ENCODE measurements at regions of chr22 and their contacts with region 1.

Region 1: DNA sequence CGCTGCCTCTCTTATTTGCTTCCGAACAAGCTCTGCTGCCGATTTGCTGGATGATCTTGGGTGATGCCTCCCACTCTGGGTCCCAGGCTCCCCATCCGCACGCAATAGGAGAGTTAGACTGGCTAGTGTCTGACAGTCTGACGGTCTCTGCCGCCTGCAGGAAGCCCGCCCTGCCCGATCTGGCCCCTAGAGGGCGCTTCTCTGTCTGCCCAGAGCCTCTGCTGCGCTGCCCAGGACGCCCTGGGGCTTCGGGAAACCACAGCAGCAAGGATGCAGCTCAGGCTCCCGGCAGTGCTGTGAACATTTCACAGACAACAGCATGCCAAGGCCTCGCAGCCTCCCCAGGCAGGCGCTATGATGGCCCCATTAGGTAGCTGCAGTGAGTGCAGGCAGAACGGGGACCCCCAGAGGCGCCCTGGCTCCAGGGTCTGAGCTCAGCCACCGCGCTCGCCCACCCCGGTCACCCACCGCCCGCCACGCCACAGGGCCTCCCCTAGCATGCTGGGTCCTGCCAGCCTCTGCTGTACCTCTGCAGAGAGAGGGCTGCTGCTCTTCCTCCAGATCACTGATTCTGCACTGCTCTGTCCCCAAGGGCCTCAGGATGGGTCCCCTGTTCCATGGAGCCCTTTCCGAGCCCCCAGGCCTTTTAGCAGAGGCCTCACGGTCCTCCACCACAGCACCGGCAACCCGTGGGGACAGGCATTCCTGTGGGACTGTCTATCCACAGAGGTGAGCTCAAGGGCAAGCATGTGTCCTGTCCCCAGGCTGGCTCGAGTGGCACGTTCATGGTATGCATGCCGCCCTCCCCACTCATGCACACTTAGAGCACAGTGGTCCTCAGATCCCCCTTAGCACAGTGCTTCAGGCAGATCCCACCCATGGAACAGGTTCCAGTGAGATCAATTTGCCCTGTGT is 4.3 kb upstream of the BAIAP2L2 start:
- DNase-seq: peak; percentile 86 to 93 (median 90)
- H3K4me3 ChIP-seq: no peak overlapping the region
- H3K27ac ChIP-seq: peak overlapping the region in 39 of 59 donors; percentile 14 to 80 (median 62)
- H3K27me3 ChIP-seq: no peaks in the 10 kb centered on the region
- CTCF ChIP-seq: peak; percentile 46 to 97 (median 92)

Region 2: DNA sequence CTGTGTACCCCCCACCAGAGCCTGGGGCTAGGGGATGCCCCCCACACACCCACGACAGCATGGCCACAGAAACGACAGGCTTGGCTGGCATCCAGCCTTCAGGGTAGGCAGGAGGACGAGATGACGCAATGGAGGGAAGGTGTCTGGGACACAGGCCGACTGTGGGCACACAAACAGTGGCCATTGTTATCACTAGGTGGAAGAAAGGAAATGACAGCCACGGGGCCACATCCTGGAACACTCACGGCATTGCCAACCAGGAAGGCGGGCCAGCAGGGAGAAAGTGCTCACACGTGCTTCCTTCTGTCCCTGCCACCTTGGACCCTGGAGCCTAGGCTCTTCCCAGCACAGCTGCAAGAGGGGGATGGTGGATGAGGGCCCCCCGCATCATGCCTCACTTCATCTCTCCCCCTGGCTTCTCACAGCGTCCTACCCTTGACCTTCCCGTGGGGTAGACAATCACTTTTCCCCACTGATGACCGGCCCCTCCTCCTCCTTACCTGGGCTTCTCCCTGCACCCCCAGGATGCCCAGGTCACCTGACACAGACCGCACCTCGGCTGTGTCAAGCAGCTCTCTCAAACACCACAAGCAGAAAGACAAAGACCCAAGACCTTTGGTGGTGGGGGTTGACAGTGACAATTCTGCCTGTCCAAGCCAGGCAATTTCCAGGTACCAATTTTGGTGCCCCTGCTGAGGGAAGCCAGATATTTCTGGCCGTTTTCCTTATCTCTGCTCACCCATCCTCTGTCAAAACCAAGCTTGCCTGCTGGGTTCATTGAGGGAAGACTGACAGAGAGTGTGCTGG is 58.3 kb after region 1 on chr22:
- intact Hi-C with region 1: loop called in 1 of 2 experiments (anchors 5 kb)
- DNase-seq: peak in 6 of 10 donors; percentile 46 to 71 (median 66)
- H3K4me3 ChIP-seq: peak overlapping the region in 4 of 59 donors; percentile 7 to 36 (median 16)
- H3K27ac ChIP-seq: peak overlapping the region in 53 of 59 donors; percentile 8 to 94 (median 79)
- H3K27me3 ChIP-seq: no peaks in the 10 kb centered on the region
- CTCF ChIP-seq: no peak

Region 3: GRCh38 chr22:38230108-38230825 is 115.5 kb after region 1 on chr22:
- intact Hi-C with region 1: loop called (anchors 5 kb)
- DNase-seq: peak in 4 of 10 donors; percentile 57 to 74 (median 64)
- H3K4me3 ChIP-seq: no peak overlapping the region
- H3K27ac ChIP-seq: peak overlapping the region in 55 of 59 donors; percentile 1 to 99 (median 79)
- H3K27me3 ChIP-seq: no peaks in the 10 kb centered on the region
- CTCF ChIP-seq: peak; percentile 18 to 70 (median 57)

Region 4: GRCh38 chr22:38305471-38306448 is 191.0 kb after region 1 on chr22:
- intact Hi-C with region 1: no loop called
- DNase-seq: no peak
- H3K4me3 ChIP-seq: peak overlapping the region in 24 of 59 donors; percentile 1 to 45 (median 18)
- H3K27ac ChIP-seq: peak overlapping the region in 56 of 59 donors; percentile 4 to 99 (median 68)
- H3K27me3 ChIP-seq: no peaks in the 10 kb centered on the region
- CTCF ChIP-seq: no peak